Activated CD8-positive, alpha-beta T cell treated with anti-CD3 and anti-CD28 coated beads, Interleukin-2, amount 10 ng/mL, durations not matched to agents 7 days and 5 days (primary cell): ENCODE measurements at regions of chr16 and their contacts with region 1.

Region 1: DNA sequence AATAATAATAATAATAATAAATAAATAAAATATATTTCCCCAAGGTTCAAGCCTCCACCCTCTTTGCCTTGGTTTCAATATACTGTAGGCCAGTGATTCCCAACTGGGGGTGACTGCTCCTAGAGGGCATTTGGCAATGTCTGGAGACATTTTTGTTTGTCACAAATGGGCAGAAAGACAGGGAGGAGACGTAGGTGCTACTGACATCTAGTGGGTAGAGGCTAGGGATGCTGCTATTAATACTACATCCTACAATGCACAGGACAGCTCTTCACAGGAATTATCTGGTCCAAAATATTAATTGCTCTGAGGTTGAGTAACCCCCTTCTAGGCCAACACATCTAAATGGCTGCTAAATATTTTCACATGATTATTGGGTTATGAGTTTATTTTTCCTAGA is 12.8 kb upstream of the PRR14 start:
- DNase-seq: peak; percentile 58
- ATAC-seq: no peak
- H3K4me3 Mint-ChIP-seq: no peak overlapping the region
- H3K27ac Mint-ChIP-seq: no peak overlapping the region
- H3K4me1 Mint-ChIP-seq: peaks cover 12% of the 10 kb centered on the region
- H3K27me3 Mint-ChIP-seq: peaks cover 4% of the 10 kb centered on the region

Region 2: DNA sequence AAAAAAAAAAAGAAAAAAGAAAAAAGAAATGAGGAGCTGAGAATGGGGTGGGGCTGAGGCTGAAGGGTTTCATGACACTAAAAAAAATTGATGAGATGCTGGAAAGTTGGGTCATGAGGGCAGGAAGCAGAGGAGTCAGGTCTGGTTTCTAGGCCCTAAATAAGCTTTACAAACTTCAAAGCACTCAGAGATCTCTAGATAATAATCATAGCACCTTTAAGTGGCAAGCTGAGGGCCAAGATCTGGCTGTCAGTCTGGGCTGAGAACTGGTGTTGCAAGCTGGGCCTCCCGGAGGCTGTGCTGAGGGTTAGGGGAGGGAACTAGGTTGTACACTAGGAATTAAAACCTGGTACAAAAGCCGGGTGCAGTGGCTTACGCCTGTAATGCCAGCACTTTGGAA is 86.2 kb before region 1 on chr16:
- CTCF ChIA-PET with region 1: no interaction called
- POLR2A ChIA-PET with region 1: no interaction called
- DNase-seq: peak; percentile 78
- ATAC-seq: peak; percentile 94
- H3K4me3 Mint-ChIP-seq: peak overlapping the region; percentile 64
- H3K27ac Mint-ChIP-seq: peak overlapping the region; percentile 95
- H3K4me1 Mint-ChIP-seq: peaks cover 56% of the 10 kb centered on the region
- H3K27me3 Mint-ChIP-seq: no peaks in the 10 kb centered on the region

Region 3: GRCh38 chr16:30650369-30651123 is 12.6 kb after region 1 on chr16 and contains the start of gene PRR14:
- CTCF ChIA-PET with region 1: interaction called, 11 read pairs
- POLR2A ChIA-PET with region 1: interaction called, 5 read pairs
- DNase-seq: peak; percentile 100
- ATAC-seq: peak; percentile 86
- H3K4me3 Mint-ChIP-seq: peak within 1 kb of the TSS; percentile 91
- H3K27ac Mint-ChIP-seq: peak within 1 kb of the TSS; percentile 95
- H3K4me1 Mint-ChIP-seq: peaks cover 40% of the 10 kb centered on the region
- H3K27me3 Mint-ChIP-seq: peaks cover 1% of the 10 kb centered on the region
- total RNA-seq, gene PRR14: 87.6 to 91.4 TPM